Posterior vena cava (tissue), 2 donors: ENCODE measurements at regions of chr2 and their contacts with region 1.

Region 1: GRCh38 chr2:98036349-98037000 is 40.7 kb upstream of the TMEM131 start:
- DNase-seq: no peak

Region 2: DNA sequence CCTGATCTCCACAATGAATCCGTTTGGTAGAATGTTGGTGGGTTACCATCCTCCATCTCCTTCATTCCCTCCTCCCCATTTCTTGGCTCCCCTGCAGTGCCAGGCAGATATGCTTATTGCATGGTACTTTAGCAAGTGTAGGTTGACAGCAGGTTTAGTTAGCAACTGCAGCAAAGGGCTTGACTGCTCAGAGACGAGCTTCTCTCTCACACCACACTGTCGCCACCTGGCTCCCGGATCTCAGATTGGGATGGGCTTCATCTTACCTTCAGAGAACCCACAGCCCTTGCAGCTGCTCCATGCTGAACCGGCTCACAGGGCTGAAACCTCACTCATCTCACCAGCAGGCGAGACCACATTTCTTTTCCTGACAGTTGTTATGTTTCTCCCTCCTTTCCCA is 139.3 kb after region 1 on chr2:
- intact Hi-C with region 1: loop called in 1 of 2 experiments (anchors 10 kb)
- DNase-seq: no peak